Panc1 (cell line): ENCODE measurements at regions of chr3 and their contacts with region 1.

Region 1: GRCh38 chr3:69659180-69659910 is 79.9 kb upstream of the MITF start:
- DNase-seq: no peak
- ATAC-seq: no peak
- H3K4me3 ChIP-seq: no peak overlapping the region
- H3K27ac ChIP-seq: no peak overlapping the region
- H3K4me1 ChIP-seq: no peaks in the 10 kb centered on the region
- H3K27me3 ChIP-seq: no peaks in the 10 kb centered on the region
- CTCF ChIP-seq: no peak

Region 2: GRCh38 chr3:69332934-69333333 is 326.4 kb before region 1 on chr3:
- CTCF ChIA-PET with region 1: interaction called, 13 read pairs
- POLR2A ChIA-PET with region 1: no interaction called
- in situ Hi-C with region 1: no loop called
- intact Hi-C with region 1: no loop called
- DNase-seq: no peak
- ATAC-seq: no peak
- H3K4me3 ChIP-seq: no peak overlapping the region
- H3K27ac ChIP-seq: no peak overlapping the region
- H3K4me1 ChIP-seq: no peaks in the 10 kb centered on the region
- H3K27me3 ChIP-seq: no peaks in the 10 kb centered on the region
- CTCF ChIP-seq: no peak